Activated CD8-positive, alpha-beta T cell treated with anti-CD3 and anti-CD28 coated beads for 36 hours (primary cell): ENCODE measurements at regions of chr19 and their contacts with region 1.

Region 1: GRCh38 chr19:14073261-14073924 is 807 bp downstream of the MISP3 start:
- DNase-seq: peak; percentile 81
- ATAC-seq: peak; percentile 68
- H3K4me3 Mint-ChIP-seq: peak overlapping the region; percentile 94
- H3K27ac Mint-ChIP-seq: peak overlapping the region; percentile 76
- H3K4me1 Mint-ChIP-seq: peaks cover 11% of the 10 kb centered on the region
- H3K27me3 Mint-ChIP-seq: peaks cover 2% of the 10 kb centered on the region
- CTCF ChIP-seq: peak; percentile 61

Region 2: DNA sequence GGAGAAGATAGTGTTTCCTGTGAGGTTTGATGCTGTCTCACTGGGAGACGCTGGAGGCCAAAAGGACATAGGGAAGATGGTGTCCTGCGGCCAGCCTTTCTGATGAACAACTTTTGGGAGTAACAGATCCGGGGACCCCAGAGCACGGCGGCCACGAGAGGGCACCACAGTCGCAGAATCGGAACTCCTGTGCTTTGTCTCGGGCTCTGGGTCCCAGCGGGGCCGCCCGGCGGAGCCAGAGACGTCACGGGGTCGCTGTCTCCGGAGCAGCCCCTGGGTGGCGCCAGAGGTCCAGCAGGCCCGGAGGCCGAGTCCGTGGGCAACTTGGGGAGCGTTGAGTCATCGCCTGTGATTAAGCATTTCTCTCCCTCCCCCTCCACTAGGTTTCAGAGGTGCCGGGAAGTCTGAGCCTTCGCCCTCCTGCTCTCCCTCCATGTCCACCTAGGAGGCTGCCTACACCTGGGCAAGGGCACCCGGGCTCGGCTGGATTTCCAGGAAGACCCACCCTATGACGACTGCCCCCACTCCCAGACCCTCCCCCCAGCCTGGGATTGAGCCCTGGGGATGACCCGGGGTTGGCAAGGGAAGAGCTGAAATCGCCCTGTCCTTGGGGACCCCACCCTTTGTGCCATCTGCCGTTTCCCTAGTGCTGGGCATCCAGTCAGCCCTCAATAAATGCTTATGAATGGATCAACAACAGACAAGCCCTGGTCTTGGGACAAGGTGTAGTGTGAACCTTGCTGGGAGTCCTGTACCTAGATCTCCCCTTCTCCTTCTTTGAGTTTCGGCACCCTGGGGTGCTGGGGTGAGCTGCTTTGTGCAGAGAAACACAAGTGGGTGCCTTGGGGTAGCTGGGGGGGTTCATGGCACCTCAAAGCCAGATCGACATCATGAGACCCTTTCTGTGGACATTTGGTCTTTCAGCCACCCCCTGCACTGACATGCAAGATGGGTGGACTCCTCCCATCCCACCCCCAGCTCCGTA is 193.0 kb before region 1 on chr19:
- CTCF ChIA-PET with region 1: interaction called, 76 read pairs
- POLR2A ChIA-PET with region 1: interaction called, 4 read pairs
- intact Hi-C with region 1: loop called (anchors 2 kb)
- DNase-seq: peak; percentile 99
- ATAC-seq: peak; percentile 96
- H3K4me3 Mint-ChIP-seq: peak overlapping the region; percentile 47
- H3K27ac Mint-ChIP-seq: peak overlapping the region; percentile 75
- H3K4me1 Mint-ChIP-seq: peaks cover 34% of the 10 kb centered on the region
- H3K27me3 Mint-ChIP-seq: no peaks in the 10 kb centered on the region
- CTCF ChIP-seq: peak; percentile 99

Region 3: GRCh38 chr19:13959962-13960862 is 113.2 kb before region 1 on chr19:
- CTCF ChIA-PET with region 1: no interaction called
- POLR2A ChIA-PET with region 1: no interaction called
- intact Hi-C with region 1: no loop called
- DNase-seq: peak; percentile 43
- ATAC-seq: peak; percentile 53
- H3K4me3 Mint-ChIP-seq: no peak overlapping the region
- H3K27ac Mint-ChIP-seq: no peak overlapping the region
- H3K4me1 Mint-ChIP-seq: no peaks in the 10 kb centered on the region
- H3K27me3 Mint-ChIP-seq: no peaks in the 10 kb centered on the region
- CTCF ChIP-seq: peak; percentile 42

Region 4: DNA sequence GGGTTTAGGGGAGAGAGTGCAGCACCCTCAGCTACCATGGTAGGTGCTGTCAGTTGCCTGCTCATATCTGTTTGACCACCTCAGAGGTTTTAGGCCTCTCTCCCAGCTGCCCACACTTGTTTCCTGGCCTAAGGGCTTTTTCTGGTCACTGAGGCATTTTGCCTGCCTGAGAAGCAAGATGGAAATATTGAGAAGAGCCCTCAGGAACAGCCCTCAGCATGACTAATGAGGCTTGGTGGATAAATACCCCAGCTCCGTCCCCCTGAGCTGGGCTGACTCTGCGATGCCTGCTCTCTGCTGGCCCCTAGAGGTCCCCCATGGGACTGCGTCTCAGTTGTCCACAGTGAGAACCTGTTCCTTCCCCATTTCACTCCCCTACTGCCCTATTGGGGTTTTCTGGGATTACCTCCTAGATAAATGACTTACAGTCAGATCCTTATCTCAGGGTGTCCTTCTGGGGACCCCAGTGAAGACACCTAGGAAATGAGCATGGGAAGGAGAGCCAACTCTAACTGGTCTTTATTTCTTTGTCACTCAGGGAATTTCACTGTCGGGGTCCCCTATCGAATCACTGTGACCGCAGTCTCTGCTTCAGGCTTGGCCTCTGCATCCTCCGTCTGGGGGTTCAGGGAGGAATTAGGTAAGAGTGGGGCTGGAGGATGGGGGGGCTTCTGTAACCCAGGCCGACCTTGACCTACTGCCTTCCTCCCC is 24.8 kb before region 1 on chr19:
- CTCF ChIA-PET with region 1: interaction called, 23 read pairs
- POLR2A ChIA-PET with region 1: interaction called, 7 read pairs
- intact Hi-C with region 1: no loop called
- DNase-seq: peak; percentile 85
- ATAC-seq: peak; percentile 97
- H3K4me3 Mint-ChIP-seq: no peak overlapping the region
- H3K27ac Mint-ChIP-seq: no peak overlapping the region
- H3K4me1 Mint-ChIP-seq: peaks cover 13% of the 10 kb centered on the region
- H3K27me3 Mint-ChIP-seq: no peaks in the 10 kb centered on the region
- CTCF ChIP-seq: peak; percentile 96

Region 5: DNA sequence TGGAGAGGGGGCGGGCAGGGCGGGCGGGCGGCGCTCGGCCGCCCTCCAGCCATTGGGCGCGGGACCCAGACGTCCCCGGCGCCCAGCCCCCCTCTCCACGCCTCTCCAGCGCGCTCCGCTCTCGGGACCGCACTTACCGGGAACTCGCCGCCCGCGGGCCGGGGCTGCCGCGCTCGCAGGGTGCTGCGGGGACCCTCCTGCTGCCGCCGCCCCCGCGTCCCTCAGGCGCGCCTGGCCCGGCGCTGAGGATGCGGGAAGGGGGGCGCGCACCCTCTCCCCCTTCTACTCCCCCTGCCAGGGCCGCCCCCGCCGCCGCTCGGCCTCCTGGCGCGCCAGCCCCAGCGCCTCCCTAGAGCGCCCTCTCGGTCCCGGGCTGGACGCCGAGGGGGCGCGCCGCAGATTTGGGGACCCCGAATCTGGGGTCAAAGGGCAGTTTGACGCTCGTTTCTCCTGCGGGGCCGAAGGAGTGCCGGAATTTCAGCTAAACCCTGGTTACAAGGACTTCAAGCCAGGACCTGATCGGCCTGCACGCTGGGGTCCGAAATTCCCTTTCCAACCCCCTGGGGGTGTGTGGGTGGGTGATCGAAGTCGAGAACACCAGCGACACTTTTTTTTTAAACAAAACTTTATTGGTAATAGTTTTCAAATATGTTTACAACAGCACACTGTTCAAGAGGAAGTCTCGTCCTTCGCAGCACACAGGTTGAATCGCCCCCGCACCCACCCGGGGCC is 17.9 kb after region 1 on chr19:
- CTCF ChIA-PET with region 1: interaction called, 16 read pairs
- POLR2A ChIA-PET with region 1: interaction called, 9 read pairs
- intact Hi-C with region 1: no loop called
- DNase-seq: peak; percentile 79
- ATAC-seq: peak; percentile 72
- H3K4me3 Mint-ChIP-seq: peak overlapping the region; percentile 82
- H3K27ac Mint-ChIP-seq: peak overlapping the region; percentile 97
- H3K4me1 Mint-ChIP-seq: peaks cover 16% of the 10 kb centered on the region
- H3K27me3 Mint-ChIP-seq: no peaks in the 10 kb centered on the region
- CTCF ChIP-seq: no peak

Region 6: GRCh38 chr19:14136509-14137281 is 63.3 kb after region 1 on chr19 and contains the start of gene ASF1B:
- CTCF ChIA-PET with region 1: interaction called, 16 read pairs
- POLR2A ChIA-PET with region 1: no interaction called
- intact Hi-C with region 1: no loop called
- DNase-seq: peak; percentile 99
- ATAC-seq: peak; percentile 83
- H3K4me3 Mint-ChIP-seq: peak within 1 kb of the TSS; percentile 95
- H3K27ac Mint-ChIP-seq: peak within 1 kb of the TSS; percentile 98
- H3K4me1 Mint-ChIP-seq: peaks cover 36% of the 10 kb centered on the region
- H3K27me3 Mint-ChIP-seq: no peaks in the 10 kb centered on the region
- CTCF ChIP-seq: peak; percentile 67
- total RNA-seq, gene ASF1B: 53.5 to 55.3 TPM